ENCODE measurements at regions of chr4 and their contacts with region 1.

Region 1: GRCh38 chr4:28759064-28759463 is 1898.4 kb downstream of the STIM2 start:
- DNase-seq: no peak
- ATAC-seq: no peak
- H3K4me3 ChIP-seq: no peak overlapping the region
- H3K4me3 Mint-ChIP-seq: no peak overlapping the region
- H3K27ac ChIP-seq: no peak overlapping the region
- H3K27ac Mint-ChIP-seq: no peak overlapping the region
- H3K4me1 ChIP-seq: no peaks in the 10 kb centered on the region
- H3K4me1 Mint-ChIP-seq: no peaks in the 10 kb centered on the region
- H3K27me3 ChIP-seq: no peaks in the 10 kb centered on the region
- H3K27me3 Mint-ChIP-seq: no peaks in the 10 kb centered on the region
- CTCF ChIP-seq: no peak

Region 2: DNA sequence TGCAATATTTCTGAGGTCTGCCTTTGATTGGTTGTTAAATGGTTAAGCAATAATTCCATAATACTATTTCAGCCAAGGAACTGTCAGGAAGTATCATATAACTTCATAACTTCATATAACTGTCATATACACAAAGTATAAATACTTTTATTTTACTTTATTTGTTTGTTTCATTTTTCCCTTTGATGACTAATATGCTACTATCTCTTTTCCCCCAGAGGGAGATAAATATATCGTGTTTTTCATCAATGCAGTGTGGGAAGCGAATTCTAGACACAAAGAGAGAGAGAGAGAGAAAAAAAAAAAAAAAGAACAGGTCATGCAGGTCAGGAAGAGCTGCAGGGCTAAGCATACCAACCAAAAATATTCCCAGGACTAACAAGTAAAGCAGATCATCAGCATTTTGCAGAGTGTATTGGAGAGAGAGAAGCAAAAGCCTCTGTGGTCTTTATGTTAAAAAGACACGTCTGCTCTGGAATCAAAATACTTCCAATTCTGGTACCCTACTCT is 49.2 kb before region 1 on chr4:
- intact Hi-C with region 1: loop called (anchors 5 kb)
- DNase-seq: no peak
- ATAC-seq: no peak
- H3K4me3 ChIP-seq: no peak overlapping the region
- H3K4me3 Mint-ChIP-seq: no peak overlapping the region
- H3K27ac ChIP-seq: no peak overlapping the region
- H3K27ac Mint-ChIP-seq: no peak overlapping the region
- H3K4me1 ChIP-seq: no peaks in the 10 kb centered on the region
- H3K4me1 Mint-ChIP-seq: no peaks in the 10 kb centered on the region
- H3K27me3 ChIP-seq: no peaks in the 10 kb centered on the region
- H3K27me3 Mint-ChIP-seq: no peaks in the 10 kb centered on the region
- CTCF ChIP-seq: no peak

Measured in natural killer cell (primary cell).